Activated T-helper 1 cell treated with anti-CD3 and anti-CD28 coated beads, Interleukin-12 subunit alpha, Interleukin-12 subunit beta, Interleukin-2, Interleukin-4 antibody, amounts not matched to agents 30 ng/mL and 10 ng/mL and 1 ng/mL, durations not matched to agents 14 hours and 24 hours and 36 hours (primary cell): ENCODE measurements at regions of chr1 and their contacts with region 1.

Region 1: GRCh38 chr1:76154206-76154956 is 79.8 kb downstream of the ST6GALNAC3 start:
- DNase-seq: peak; percentile 75
- H3K4me3 Mint-ChIP-seq: peak overlapping the region; percentile 87
- H3K27ac Mint-ChIP-seq: peak overlapping the region; percentile 82
- H3K4me1 Mint-ChIP-seq: peaks cover 14% of the 10 kb centered on the region
- H3K27me3 Mint-ChIP-seq: peaks cover 2% of the 10 kb centered on the region

Region 2: DNA sequence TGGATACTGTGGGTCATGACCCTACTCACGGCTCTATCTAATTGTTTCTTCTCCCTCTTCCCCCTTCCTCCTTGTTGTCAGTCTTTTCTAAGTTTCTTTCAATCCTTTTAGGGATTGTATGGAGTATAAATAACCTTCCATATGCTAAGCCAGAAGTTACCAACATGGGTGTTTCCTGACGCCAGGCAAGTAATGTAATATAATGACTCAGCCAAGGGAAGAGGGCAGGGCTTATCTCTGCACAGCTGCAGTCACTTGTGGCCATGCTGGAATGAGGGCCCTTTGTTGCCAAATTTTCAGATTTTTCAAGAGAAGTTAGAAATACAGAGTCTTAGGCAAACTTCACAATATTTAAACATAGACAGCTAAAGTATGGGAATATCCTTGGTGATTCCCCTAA is 114.8 kb after region 1 on chr1:
- intact Hi-C with region 1: loop called (anchors 1 kb)
- DNase-seq: no peak
- H3K4me3 Mint-ChIP-seq: peak overlapping the region; percentile 48
- H3K27ac Mint-ChIP-seq: peak overlapping the region; percentile 77
- H3K4me1 Mint-ChIP-seq: peaks cover 71% of the 10 kb centered on the region
- H3K27me3 Mint-ChIP-seq: no peaks in the 10 kb centered on the region

Region 3: DNA sequence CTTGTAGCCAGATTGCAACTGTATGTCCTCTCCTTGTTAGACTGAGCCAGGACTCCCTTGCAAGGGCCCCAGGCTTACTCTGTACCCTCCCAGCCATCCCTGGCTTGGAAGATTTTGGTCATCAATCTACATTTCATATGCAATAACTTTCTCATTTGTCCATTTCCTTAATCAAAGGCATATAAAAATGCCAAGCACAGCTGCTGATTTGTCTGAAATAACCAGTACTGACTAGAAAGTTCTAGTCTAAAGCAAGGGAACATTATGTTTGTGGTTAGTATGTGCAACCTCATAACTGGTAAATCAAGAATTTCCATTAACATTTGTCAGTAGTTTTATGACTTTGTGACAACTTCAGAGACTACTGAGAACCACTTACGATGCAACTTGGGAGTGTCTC is 290.4 kb after region 1 on chr1:
- intact Hi-C with region 1: loop called (anchors 10 kb)
- DNase-seq: no peak
- H3K4me3 Mint-ChIP-seq: no peak overlapping the region
- H3K27ac Mint-ChIP-seq: no peak overlapping the region
- H3K4me1 Mint-ChIP-seq: no peaks in the 10 kb centered on the region
- H3K27me3 Mint-ChIP-seq: no peaks in the 10 kb centered on the region

Region 4: GRCh38 chr1:76615253-76616035 is 461.1 kb after region 1 on chr1:
- intact Hi-C with region 1: loop called (anchors 10 kb)
- DNase-seq: no peak
- H3K4me3 Mint-ChIP-seq: no peak overlapping the region
- H3K27ac Mint-ChIP-seq: no peak overlapping the region
- H3K4me1 Mint-ChIP-seq: no peaks in the 10 kb centered on the region
- H3K27me3 Mint-ChIP-seq: no peaks in the 10 kb centered on the region

Region 5: DNA sequence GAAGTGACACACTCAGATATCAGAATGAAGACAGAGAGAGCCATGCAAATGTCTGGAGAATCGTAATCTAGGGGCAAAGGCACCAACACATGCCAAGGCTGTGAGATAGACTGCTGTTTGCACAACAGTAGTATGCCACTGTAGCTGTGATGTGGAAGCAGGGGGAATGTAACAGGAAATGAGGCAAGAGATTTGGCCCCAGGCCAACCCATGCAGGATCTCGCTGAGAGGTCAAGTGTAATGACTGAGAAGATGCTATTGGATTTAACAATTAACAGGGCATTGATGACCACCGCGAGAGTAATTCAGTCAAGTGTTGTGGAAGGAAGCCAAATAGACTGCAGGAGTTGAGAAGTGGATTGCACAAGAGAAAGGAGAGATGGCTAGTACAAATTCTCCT is 605.6 kb after region 1 on chr1:
- intact Hi-C with region 1: no loop called
- DNase-seq: no peak
- H3K4me3 Mint-ChIP-seq: no peak overlapping the region
- H3K27ac Mint-ChIP-seq: no peak overlapping the region
- H3K4me1 Mint-ChIP-seq: no peaks in the 10 kb centered on the region
- H3K27me3 Mint-ChIP-seq: no peaks in the 10 kb centered on the region

Region 6: DNA sequence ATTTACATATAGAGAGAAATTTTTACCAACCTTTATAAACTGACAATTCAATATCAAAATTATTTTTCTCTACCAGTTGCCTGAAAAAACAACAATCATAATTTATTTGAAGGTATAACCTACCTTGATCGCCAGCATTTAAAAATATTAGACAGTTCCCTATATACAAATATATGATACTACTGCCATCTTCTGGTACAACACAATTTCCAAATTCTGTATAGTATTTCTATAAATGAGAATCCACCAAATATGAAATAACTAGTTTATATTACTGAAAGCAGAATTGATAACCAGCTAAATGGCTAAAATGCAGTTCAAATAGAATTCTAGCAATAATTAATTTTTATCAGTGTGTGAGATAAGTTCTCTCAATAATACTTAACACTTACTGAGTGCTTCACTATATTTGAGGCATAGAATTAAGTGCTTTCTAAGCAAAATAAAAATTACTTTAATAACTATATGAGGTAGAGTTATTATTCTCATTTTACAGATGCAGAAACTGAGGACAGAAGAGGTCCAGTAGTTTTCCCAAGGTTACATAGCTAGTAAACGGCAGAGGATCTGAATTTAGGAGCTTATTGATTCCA is 989.2 kb after region 1 on chr1:
- intact Hi-C with region 1: loop called (anchors 1 kb)
- DNase-seq: no peak
- H3K4me3 Mint-ChIP-seq: no peak overlapping the region
- H3K27ac Mint-ChIP-seq: no peak overlapping the region
- H3K4me1 Mint-ChIP-seq: no peaks in the 10 kb centered on the region
- H3K27me3 Mint-ChIP-seq: no peaks in the 10 kb centered on the region

Region 7: GRCh38 chr1:77683160-77684148 is 1529.1 kb after region 1 on chr1:
- intact Hi-C with region 1: loop called (anchors 10 kb)
- DNase-seq: peak; percentile 90
- H3K4me3 Mint-ChIP-seq: peak overlapping the region; percentile 96
- H3K27ac Mint-ChIP-seq: peak overlapping the region; percentile 95
- H3K4me1 Mint-ChIP-seq: peaks cover 29% of the 10 kb centered on the region
- H3K27me3 Mint-ChIP-seq: no peaks in the 10 kb centered on the region